WTC11 (cell line): ENCODE measurements at regions of chr9 and their contacts with region 1.

Region 1: GRCh38 chr9:136170006-136170901 is 34.7 kb downstream of the LHX3 start:
- DNase-seq: peak; percentile 79
- ATAC-seq: peak; percentile 69
- H3K4me3 Mint-ChIP-seq: no peak overlapping the region
- H3K27ac Mint-ChIP-seq: no peak overlapping the region
- H3K4me1 Mint-ChIP-seq: peaks cover 27% of the 10 kb centered on the region
- H3K27me3 Mint-ChIP-seq: peaks cover 3% of the 10 kb centered on the region; the same call in 1 of the 2 replicates
- CTCF ChIP-seq: peak; percentile 88

Region 2: DNA sequence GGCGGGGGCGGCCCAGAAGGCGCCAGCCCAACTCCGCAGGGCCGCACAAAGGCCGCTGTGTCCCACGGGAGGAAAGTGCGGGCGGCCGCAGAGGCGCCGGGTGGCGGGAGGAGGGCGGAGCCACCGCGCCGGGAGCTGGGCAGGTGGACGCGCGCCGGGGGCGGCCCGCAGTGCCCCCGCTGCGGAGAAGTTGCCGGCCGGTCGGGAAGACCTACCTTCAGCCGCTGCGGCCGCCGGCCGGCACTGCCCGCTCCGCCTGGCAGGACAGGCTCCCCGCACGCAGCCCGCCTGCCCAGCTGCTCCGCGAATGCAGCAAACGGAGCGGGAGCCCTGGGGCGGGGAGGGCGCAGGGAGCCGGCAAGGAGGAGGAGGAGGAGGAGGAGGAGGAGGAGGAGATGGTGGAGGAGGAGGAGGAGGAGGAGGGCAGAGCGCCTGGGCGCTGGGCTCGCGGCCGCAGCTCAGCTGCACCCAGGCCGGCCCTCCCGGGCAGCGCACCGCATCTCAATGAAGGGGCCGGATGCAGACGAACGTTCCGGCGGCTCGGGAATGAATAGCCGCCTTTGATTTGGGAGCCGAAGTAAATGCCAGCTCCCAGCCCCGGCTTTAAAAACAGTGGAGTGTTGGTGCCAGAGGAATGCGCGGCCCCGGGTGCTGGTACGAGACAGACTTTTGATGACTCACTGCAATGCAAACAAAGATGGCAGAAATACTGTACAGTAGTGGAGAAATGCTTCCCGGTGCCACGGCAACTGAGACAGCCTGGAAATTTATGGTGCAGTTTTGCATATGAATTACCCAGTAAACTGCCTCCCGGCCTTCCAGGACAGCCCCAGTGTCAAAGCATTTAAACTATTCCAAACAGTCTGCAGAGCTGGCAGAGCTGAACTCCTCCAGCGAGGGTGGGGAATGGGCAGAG is 118.5 kb before region 1 on chr9:
- CTCF ChIA-PET with region 1: no interaction called
- POLR2A ChIA-PET with region 1: no interaction called
- DNase-seq: peak; percentile 59
- ATAC-seq: peak; percentile 63
- H3K4me3 Mint-ChIP-seq: peak overlapping the region; percentile 68
- H3K27ac Mint-ChIP-seq: peak overlapping the region; percentile 73
- H3K4me1 Mint-ChIP-seq: peaks cover 29% of the 10 kb centered on the region
- H3K27me3 Mint-ChIP-seq: no peaks in the 10 kb centered on the region
- CTCF ChIP-seq: no peak

Region 3: DNA sequence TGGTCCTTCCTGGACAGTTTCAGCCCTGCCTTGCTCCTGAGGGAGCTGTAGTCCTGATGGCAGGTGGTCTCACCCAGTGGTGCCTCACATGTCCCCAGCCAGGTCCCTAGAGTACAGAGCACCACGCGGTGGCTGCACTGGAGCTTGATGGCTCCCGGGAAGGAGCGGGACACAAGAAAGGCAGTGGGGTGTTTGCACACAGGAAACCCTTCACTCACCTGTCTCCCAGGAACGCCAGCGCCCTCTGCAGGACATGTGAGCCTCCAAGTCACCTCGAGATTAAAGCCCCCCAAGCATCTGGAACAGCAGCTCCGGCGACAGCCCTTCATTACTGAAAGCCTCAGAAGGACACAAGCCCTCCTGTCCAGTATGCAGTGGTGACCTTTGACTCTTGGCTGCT is 31.7 kb before region 1 on chr9:
- CTCF ChIA-PET with region 1: interaction called, 24 read pairs
- POLR2A ChIA-PET with region 1: no interaction called
- DNase-seq: peak; percentile 94
- ATAC-seq: peak; percentile 64
- H3K4me3 Mint-ChIP-seq: no peak overlapping the region; the same call in 1 of the 2 replicates
- H3K27ac Mint-ChIP-seq: peak overlapping the region; percentile 94; the same call in 1 of the 2 replicates
- H3K4me1 Mint-ChIP-seq: peaks cover 17% of the 10 kb centered on the region
- H3K27me3 Mint-ChIP-seq: peaks cover 10% of the 10 kb centered on the region
- CTCF ChIP-seq: peak; percentile 72

Region 4: DNA sequence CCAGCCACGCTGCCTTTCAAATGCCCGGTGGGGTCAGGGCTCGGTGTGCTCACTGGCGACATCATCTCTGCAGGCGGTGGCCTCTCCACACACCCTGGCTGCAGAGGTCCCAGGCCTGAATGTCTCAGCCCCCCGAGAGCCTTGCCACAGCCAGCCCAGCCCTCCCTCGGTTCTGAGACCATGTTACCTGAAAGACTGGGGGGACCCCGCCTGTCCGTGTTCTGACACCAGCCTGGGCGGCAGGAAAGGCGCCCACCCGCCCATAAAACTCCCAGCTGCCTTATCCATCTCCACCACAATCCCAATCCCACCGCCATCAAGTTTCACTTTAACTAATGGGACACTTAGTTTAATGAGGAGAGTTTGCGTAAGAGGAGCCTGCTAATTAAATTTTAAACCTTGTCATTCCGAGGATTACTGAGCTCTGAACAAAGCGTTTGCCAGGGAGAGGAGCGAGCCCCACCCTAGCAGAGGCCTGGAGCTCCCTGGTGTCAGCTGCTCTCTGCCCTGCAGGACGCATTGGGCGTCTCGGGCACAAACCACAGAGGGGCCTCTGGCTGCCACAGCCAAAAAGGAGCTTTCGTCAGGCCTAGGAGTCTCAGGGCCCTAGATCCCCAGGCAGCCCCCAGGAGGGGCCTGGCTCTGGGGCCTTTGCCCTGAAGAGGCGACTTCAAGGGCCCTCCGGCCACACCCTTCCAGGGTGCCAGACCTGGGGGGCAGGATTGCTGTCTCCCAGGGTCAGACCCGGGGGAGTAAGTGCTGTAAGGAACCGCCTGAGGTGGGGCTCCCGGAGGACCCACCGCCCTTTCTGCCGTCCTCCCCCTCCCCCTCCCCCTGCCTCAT is 19.4 kb after region 1 on chr9:
- CTCF ChIA-PET with region 1: interaction called, 35 read pairs
- POLR2A ChIA-PET with region 1: interaction called, 5 read pairs
- DNase-seq: peak; percentile 9
- ATAC-seq: no peak
- H3K4me3 Mint-ChIP-seq: no peak overlapping the region
- H3K27ac Mint-ChIP-seq: no peak overlapping the region
- H3K4me1 Mint-ChIP-seq: peaks cover 7% of the 10 kb centered on the region; the same call in 1 of the 2 replicates
- H3K27me3 Mint-ChIP-seq: peaks cover 45% of the 10 kb centered on the region
- CTCF ChIP-seq: no peak

Region 5: GRCh38 chr9:136204838-136205706 is 34.8 kb after region 1 on chr9 and contains the start of gene LHX3:
- CTCF ChIA-PET with region 1: interaction called, 24 read pairs
- POLR2A ChIA-PET with region 1: no interaction called
- DNase-seq: peak; percentile 69
- ATAC-seq: peak; percentile 36
- H3K4me3 Mint-ChIP-seq: no peak within 1 kb of the TSS; the same call in 1 of the 2 replicates
- H3K27ac Mint-ChIP-seq: no peak within 1 kb of the TSS
- H3K4me1 Mint-ChIP-seq: no peaks in the 10 kb centered on the region
- H3K27me3 Mint-ChIP-seq: peaks cover 62% of the 10 kb centered on the region
- CTCF ChIP-seq: no peak
- total RNA-seq, gene LHX3: 0.11 TPM in 1 of 3 replicates, not detected in the others

Region 6: GRCh38 chr9:136267261-136268111 is 97.2 kb after region 1 on chr9:
- CTCF ChIA-PET with region 1: interaction called, 19 read pairs
- POLR2A ChIA-PET with region 1: no interaction called
- DNase-seq: peak; percentile 84
- ATAC-seq: peak; percentile 91
- H3K4me3 Mint-ChIP-seq: peak overlapping the region; percentile 76
- H3K27ac Mint-ChIP-seq: peak overlapping the region; percentile 79
- H3K4me1 Mint-ChIP-seq: peaks cover 22% of the 10 kb centered on the region
- H3K27me3 Mint-ChIP-seq: no peaks in the 10 kb centered on the region; the same call in 1 of the 2 replicates
- CTCF ChIP-seq: no peak